ENCODE measurements at regions of chr7 and their contacts with region 1.

Region 1: GRCh38 chr7:129218514-129219062 is 6.2 kb upstream of the AHCYL2 start:
- DNase-seq: peak; percentile 80 to 89
- H3K4me3 ChIP-seq: no peak overlapping the region
- H3K4me3 Mint-ChIP-seq: no peak overlapping the region
- H3K27ac Mint-ChIP-seq: no peak overlapping the region
- H3K4me1 ChIP-seq: 0 out of 2 replicates have a peak, but pooled peaks cover 1% of the 10 kb centered on the region
- H3K4me1 Mint-ChIP-seq: peaks cover 8% of the 10 kb centered on the region
- H3K27me3 ChIP-seq: no peaks in the 10 kb centered on the region
- H3K27me3 Mint-ChIP-seq: no peaks in the 10 kb centered on the region
- CTCF ChIP-seq: peak; percentile 91

Region 2: GRCh38 chr7:129271500-129272355 is 53.1 kb after region 1 on chr7:
- CTCF ChIA-PET with region 1: interaction called, 14 read pairs
- POLR2A ChIA-PET with region 1: no interaction called
- intact Hi-C with region 1: loop called (anchors 1 kb)
- DNase-seq: peak; percentile 58 to 78
- H3K4me3 ChIP-seq: no peak overlapping the region
- H3K4me3 Mint-ChIP-seq: no peak overlapping the region
- H3K27ac Mint-ChIP-seq: no peak overlapping the region
- H3K4me1 ChIP-seq: no peaks in the 10 kb centered on the region
- H3K4me1 Mint-ChIP-seq: no peaks in the 10 kb centered on the region
- H3K27me3 ChIP-seq: no peaks in the 10 kb centered on the region
- H3K27me3 Mint-ChIP-seq: no peaks in the 10 kb centered on the region
- CTCF ChIP-seq: peak; percentile 61 to 74

Region 3: GRCh38 chr7:129298268-129298893 is 79.8 kb after region 1 on chr7:
- CTCF ChIA-PET with region 1: interaction called, 12 read pairs
- POLR2A ChIA-PET with region 1: no interaction called
- intact Hi-C with region 1: loop called (anchors 1 kb)
- DNase-seq: peak in 1 of 2 experiments; percentile 38
- H3K4me3 ChIP-seq: no peak overlapping the region
- H3K4me3 Mint-ChIP-seq: no peak overlapping the region
- H3K27ac Mint-ChIP-seq: no peak overlapping the region
- H3K4me1 ChIP-seq: no peaks in the 10 kb centered on the region
- H3K4me1 Mint-ChIP-seq: no peaks in the 10 kb centered on the region
- H3K27me3 ChIP-seq: no peaks in the 10 kb centered on the region
- H3K27me3 Mint-ChIP-seq: no peaks in the 10 kb centered on the region
- CTCF ChIP-seq: peak; percentile 73 to 82

Region 4: DNA sequence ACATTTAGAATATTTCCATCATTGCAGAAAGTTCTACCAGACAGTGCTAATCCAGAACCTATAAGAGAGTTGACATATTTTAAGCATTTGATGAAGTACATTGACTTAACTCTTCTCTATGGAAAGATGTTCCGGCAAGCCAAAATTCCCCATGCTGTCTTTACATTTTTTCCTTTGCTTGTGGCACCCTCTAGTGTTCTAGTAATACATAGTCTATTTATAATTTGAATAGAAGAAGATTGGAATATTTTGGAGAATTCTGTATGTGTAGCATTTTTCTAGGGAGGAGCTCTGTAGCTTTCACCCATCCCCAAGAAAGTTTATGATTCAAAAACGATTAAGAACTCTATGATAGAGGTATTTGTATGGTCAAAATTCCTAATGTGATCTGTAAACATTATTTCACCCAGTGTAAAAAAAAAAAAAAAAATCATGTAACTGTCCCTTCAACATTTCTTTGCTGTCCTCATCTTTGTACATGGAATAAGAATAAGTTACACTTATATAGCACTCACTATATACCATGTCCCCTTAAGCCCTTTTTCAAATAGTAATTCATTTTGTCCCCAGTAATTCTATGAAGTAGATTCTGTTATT is 426.1 kb after region 1 on chr7:
- CTCF ChIA-PET with region 1: interaction called, 6 read pairs
- POLR2A ChIA-PET with region 1: no interaction called
- intact Hi-C with region 1: loop called (anchors 5 kb)
- DNase-seq: peak in 1 of 2 experiments; percentile 40
- H3K4me3 ChIP-seq: no peak overlapping the region
- H3K4me3 Mint-ChIP-seq: no peak overlapping the region
- H3K27ac Mint-ChIP-seq: no peak overlapping the region
- H3K4me1 ChIP-seq: no peaks in the 10 kb centered on the region
- H3K4me1 Mint-ChIP-seq: no peaks in the 10 kb centered on the region
- H3K27me3 ChIP-seq: no peaks in the 10 kb centered on the region
- H3K27me3 Mint-ChIP-seq: no peaks in the 10 kb centered on the region
- CTCF ChIP-seq: peak; percentile 49 to 51

Measured in Caco-2 (cell line).